CD8-positive, alpha-beta memory T cell (primary cell): ENCODE measurements at regions of chr3 and their contacts with region 1.

Region 1: GRCh38 chr3:141561426-141562034 is 74.7 kb downstream of the RASA2 start:
- DNase-seq: peak in 4 of 5 donors; percentile 25 to 70 (median 58)
- H3K4me3 ChIP-seq: no peak overlapping the region
- H3K4me3 Mint-ChIP-seq: no peak overlapping the region
- H3K27ac ChIP-seq: no peak overlapping the region
- H3K27ac Mint-ChIP-seq: peak overlapping the region; percentile 35 to 88 (median 79)
- H3K4me1 ChIP-seq: peaks cover 37% of the 10 kb centered on the region
- H3K4me1 Mint-ChIP-seq: peaks cover 21 to 36% (median 28%) of the 10 kb centered on the region in 3 donors
- H3K27me3 ChIP-seq: no peaks in the 10 kb centered on the region
- H3K27me3 Mint-ChIP-seq: no peaks in the 10 kb centered on the region

Region 2: GRCh38 chr3:141311496-141312353 is 249.8 kb before region 1 on chr3:
- CTCF ChIA-PET with region 1: interaction called, 19 read pairs
- POLR2A ChIA-PET with region 1: interaction called, 3 read pairs
- DNase-seq: peak; percentile 96 to 99 (median 98)
- H3K4me3 ChIP-seq: peak overlapping the region; percentile 58
- H3K4me3 Mint-ChIP-seq: peak overlapping the region; percentile 90 to 98 (median 95)
- H3K27ac ChIP-seq: peak overlapping the region; percentile 66
- H3K27ac Mint-ChIP-seq: peak overlapping the region; percentile 82 to 99 (median 97)
- H3K4me1 ChIP-seq: peaks cover 44% of the 10 kb centered on the region
- H3K4me1 Mint-ChIP-seq: peaks cover 44 to 53% (median 48%) of the 10 kb centered on the region in 3 donors
- H3K27me3 ChIP-seq: no peaks in the 10 kb centered on the region
- H3K27me3 Mint-ChIP-seq: peaks cover 0 to 1% of the 10 kb centered on the region in 2 donors

Region 3: DNA sequence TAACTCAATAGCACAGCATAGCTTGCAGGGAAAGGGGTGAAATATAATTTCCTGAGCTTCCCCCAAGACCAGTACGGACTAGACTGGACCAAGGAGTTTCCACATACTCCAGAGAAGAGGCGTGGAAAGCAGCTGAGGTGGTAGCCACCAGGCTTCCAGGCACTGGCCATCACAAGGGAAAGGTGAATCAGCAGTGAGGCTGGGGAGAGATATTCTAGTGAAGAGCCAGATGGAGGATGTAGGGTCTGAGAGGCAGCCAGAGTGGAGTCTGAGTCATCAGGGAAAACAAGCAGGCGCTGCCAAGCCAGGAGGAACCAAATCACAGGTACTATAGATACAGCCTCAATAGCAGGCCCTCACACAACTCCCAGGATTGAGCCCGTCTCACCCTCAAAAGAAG is 84.3 kb before region 1 on chr3:
- CTCF ChIA-PET with region 1: interaction called, 24 read pairs
- POLR2A ChIA-PET with region 1: interaction called, 3 read pairs
- DNase-seq: no peak
- H3K4me3 ChIP-seq: no peak overlapping the region
- H3K4me3 Mint-ChIP-seq: no peak overlapping the region
- H3K27ac ChIP-seq: no peak overlapping the region
- H3K27ac Mint-ChIP-seq: no peak overlapping the region
- H3K4me1 ChIP-seq: peaks cover 17% of the 10 kb centered on the region
- H3K4me1 Mint-ChIP-seq: peaks cover 28 to 43% (median 38%) of the 10 kb centered on the region in 3 donors
- H3K27me3 ChIP-seq: no peaks in the 10 kb centered on the region
- H3K27me3 Mint-ChIP-seq: peaks cover 0 to 6% of the 10 kb centered on the region in 2 donors